Activated B cell treated with CpG ODN at 0.5 μM for 24 hours (primary cell): ENCODE measurements at regions of chr18 and their contacts with region 1.

Region 1: DNA sequence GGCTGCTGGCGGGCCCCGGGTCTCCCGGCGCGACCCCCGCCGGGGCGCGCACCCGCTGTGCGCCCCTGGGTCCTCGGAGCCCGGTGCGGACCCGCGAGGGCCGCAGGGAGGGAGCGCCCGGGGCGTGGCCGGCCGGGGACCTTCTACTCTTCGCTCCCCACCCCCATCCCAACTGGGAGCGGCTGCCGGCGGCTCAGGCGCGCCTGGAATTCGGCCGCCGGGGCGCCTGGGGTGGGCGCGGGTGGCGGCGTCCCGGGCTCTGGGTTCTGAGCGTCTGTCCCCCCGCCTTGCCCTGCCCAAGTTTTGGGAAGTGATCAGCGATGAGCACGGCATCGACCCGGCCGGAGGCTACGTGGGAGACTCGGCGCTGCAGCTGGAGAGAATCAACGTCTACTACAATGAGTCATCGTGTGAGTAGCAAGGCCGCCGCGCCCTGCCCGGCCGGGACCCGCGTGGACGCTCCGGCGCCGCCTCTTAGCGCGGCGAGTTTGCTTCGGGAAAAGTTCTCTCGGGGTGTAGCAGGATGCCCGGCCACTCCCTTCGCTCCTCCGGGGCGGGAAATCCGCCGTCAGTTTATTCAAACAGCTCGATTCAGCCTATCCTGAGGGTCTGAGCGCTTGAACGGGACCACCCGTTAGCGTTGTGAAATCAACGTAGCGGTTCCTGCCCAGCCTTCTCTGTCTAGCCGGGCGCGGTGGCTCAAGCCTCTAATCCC is 502 bp downstream of the TUBB6 start:
- DNase-seq: peak; percentile 57
- ATAC-seq: peak; percentile 63
- H3K4me3 Mint-ChIP-seq: peak overlapping the region; percentile 85
- H3K27ac Mint-ChIP-seq: peak overlapping the region; percentile 69
- H3K4me1 Mint-ChIP-seq: peaks cover 32% of the 10 kb centered on the region
- H3K27me3 Mint-ChIP-seq: peaks cover 20% of the 10 kb centered on the region
- CTCF ChIP-seq: no peak

Region 2: GRCh38 chr18:12327510-12328178 is 19.1 kb after region 1 on chr18:
- CTCF ChIA-PET with region 1: no interaction called
- POLR2A ChIA-PET with region 1: interaction called, 12 read pairs
- intact Hi-C with region 1: no loop called
- DNase-seq: peak; percentile 49
- ATAC-seq: peak; percentile 52
- H3K4me3 Mint-ChIP-seq: no peak overlapping the region
- H3K27ac Mint-ChIP-seq: no peak overlapping the region
- H3K4me1 Mint-ChIP-seq: peaks cover 13% of the 10 kb centered on the region
- H3K27me3 Mint-ChIP-seq: no peaks in the 10 kb centered on the region
- CTCF ChIP-seq: no peak

Region 3: DNA sequence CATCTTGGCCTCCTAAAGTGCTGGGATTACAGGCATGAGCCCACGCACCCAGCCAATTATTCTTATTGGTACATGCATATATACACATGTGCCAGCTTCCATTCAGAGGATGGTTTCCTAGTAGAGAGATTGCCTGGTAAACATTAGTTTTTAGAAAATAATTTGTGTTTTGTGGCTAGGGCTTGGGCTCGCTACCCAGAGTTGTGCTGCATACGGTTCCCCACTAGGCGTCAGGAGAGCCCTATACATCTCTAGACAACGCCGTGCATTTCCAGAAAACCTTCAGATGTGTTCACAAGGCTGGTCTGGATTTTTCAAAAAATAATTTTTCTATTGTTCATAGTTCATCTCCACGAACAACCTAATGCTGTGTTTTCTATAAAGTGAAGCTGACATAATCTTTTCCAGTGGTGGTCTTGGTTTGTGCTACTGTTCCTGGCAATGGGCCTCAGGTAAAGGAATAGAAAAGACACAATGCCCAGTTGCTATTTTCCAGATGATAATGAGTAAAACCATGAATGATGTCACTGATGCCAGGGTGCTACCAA is 83.1 kb after region 1 on chr18:
- CTCF ChIA-PET with region 1: no interaction called
- POLR2A ChIA-PET with region 1: no interaction called
- intact Hi-C with region 1: no loop called
- DNase-seq: no peak
- ATAC-seq: peak; percentile 98
- H3K4me3 Mint-ChIP-seq: no peak overlapping the region
- H3K27ac Mint-ChIP-seq: no peak overlapping the region
- H3K4me1 Mint-ChIP-seq: no peaks in the 10 kb centered on the region
- H3K27me3 Mint-ChIP-seq: peaks cover 13% of the 10 kb centered on the region
- CTCF ChIP-seq: no peak

Region 4: GRCh38 chr18:12679183-12679786 is 370.7 kb after region 1 on chr18:
- CTCF ChIA-PET with region 1: no interaction called
- POLR2A ChIA-PET with region 1: no interaction called
- intact Hi-C with region 1: no loop called
- DNase-seq: no peak
- ATAC-seq: no peak
- H3K4me3 Mint-ChIP-seq: no peak overlapping the region
- H3K27ac Mint-ChIP-seq: no peak overlapping the region
- H3K4me1 Mint-ChIP-seq: no peaks in the 10 kb centered on the region
- H3K27me3 Mint-ChIP-seq: no peaks in the 10 kb centered on the region
- CTCF ChIP-seq: no peak